ENCODE measurements at regions of chr20 and their contacts with region 1.

Region 1: GRCh38 chr20:51595058-51595532 is 52.6 kb upstream of the NFATC2 start:
- DNase-seq: peak; percentile 38
- H3K4me3 ChIP-seq: no peak overlapping the region
- H3K27me3 ChIP-seq: no peaks in the 10 kb centered on the region
- CTCF ChIP-seq: peak; percentile 90

Region 2: DNA sequence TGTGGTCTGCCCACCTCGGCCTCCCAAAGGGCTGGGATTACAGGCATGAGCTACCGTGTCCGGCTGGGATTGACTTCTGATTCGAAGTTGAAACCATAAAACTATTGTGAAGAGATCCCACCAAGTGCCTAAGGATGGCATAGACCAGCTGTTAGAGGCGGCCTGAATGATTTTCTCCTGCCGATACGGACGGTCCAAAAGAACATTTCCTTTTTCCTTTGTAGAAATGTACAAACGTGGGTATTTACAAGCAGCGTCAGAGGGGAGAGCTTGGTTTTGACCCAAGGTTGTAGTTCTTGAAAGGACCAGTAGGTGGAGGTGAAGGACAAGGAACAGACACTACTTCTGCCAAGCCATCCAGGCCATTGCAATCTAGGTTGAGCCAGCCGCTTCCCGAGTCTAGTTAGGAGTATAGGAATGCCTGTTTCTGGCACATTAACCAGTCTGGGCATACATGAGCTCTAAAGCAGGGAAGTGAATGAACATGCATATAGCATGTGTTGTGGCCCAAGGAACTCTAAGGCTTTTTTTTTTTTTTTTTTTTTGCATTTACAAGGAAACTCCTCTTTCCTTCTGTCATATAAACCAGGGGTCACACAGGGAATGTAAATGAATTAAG is 607.4 kb before region 1 on chr20:
- CTCF ChIA-PET with region 1: interaction called, 18 read pairs
- POLR2A ChIA-PET with region 1: no interaction called
- DNase-seq: peak; percentile 44
- H3K4me3 ChIP-seq: no peak overlapping the region
- H3K27me3 ChIP-seq: no peaks in the 10 kb centered on the region
- CTCF ChIP-seq: peak; percentile 80

Region 3: GRCh38 chr20:51372176-51372803 is 222.8 kb before region 1 on chr20:
- CTCF ChIA-PET with region 1: interaction called, 66 read pairs
- POLR2A ChIA-PET with region 1: no interaction called
- DNase-seq: no peak
- H3K4me3 ChIP-seq: no peak overlapping the region
- H3K27me3 ChIP-seq: no peaks in the 10 kb centered on the region
- CTCF ChIP-seq: peak; percentile 94

Region 4: DNA sequence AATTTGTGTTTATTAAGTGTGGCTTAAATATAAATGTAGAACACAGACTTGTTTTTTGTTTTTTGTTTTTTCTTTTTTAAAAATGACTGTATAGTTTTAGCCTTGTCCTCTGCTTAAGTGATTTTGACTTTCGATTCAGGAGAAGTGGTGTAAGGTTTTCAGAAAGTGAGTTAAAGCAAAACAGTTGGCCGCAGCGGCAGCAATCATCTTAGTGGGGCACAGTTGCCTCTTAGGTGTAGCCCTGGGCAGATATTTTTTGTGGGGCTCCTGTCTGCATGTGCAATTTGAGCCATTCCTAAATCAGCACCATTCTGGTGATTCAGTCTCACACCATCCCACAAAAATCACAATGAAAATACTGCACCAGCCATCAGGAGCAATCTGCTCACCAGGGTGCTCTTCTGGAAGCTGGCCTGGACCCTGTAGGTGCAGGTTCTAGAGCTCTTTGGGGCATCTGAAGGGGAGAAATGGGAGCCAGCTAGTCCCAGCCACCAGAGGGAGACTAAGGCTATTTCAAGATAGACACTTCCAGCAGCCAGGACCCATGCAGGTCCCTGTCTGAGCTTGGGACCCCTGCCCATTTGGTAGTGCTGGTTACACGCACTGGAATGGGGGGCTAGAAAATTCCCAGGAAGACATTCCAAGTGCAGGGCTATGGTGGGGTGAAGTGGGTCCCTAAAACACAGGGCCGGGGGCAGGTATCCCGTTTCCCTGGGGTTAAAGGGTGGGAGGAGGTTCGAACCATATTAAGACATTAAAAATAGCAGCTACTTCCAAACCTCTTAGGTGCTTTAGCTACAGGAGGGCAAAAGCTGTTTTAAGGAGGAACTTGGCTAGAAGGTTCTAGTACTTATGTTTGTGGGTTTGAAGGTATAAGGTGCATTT is 209.2 kb before region 1 on chr20:
- CTCF ChIA-PET with region 1: interaction called, 84 read pairs
- POLR2A ChIA-PET with region 1: no interaction called
- DNase-seq: no peak
- H3K4me3 ChIP-seq: no peak overlapping the region
- H3K27me3 ChIP-seq: no peaks in the 10 kb centered on the region
- CTCF ChIP-seq: peak; percentile 75

Region 5: DNA sequence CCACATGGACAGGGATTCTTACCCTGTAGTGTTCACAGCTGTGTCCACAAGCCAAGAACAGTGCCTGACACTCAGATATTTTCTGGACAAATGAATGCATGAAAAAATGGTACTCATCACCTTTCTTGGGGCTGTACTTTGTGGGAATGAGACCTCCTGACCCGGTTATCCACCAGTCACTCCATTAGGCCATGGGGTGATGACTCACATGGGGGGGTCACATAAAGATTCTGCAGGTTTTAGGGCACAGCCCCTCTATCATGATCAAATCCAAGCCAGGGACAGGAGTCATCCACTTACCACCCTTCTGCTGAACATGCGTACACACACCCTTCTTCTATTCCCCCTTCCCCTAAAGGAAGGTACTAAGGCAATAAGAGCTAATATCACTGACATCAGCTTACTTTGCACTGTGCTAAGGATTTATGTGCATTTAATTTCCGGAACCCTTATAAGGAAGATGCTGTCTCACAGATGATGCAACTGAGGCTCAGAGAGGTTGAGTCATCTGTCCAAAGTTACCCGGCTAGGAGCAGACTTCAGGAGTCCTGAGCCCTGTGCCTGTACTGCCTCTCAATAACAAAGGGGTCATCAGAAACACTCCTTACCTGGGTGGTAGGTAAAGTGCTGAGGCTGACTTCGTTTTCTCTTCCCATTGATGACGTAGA is 160.4 kb before region 1 on chr20:
- CTCF ChIA-PET with region 1: no interaction called
- POLR2A ChIA-PET with region 1: no interaction called
- DNase-seq: peak; percentile 37
- H3K4me3 ChIP-seq: no peak overlapping the region
- H3K27me3 ChIP-seq: no peaks in the 10 kb centered on the region
- CTCF ChIP-seq: no peak

Region 6: DNA sequence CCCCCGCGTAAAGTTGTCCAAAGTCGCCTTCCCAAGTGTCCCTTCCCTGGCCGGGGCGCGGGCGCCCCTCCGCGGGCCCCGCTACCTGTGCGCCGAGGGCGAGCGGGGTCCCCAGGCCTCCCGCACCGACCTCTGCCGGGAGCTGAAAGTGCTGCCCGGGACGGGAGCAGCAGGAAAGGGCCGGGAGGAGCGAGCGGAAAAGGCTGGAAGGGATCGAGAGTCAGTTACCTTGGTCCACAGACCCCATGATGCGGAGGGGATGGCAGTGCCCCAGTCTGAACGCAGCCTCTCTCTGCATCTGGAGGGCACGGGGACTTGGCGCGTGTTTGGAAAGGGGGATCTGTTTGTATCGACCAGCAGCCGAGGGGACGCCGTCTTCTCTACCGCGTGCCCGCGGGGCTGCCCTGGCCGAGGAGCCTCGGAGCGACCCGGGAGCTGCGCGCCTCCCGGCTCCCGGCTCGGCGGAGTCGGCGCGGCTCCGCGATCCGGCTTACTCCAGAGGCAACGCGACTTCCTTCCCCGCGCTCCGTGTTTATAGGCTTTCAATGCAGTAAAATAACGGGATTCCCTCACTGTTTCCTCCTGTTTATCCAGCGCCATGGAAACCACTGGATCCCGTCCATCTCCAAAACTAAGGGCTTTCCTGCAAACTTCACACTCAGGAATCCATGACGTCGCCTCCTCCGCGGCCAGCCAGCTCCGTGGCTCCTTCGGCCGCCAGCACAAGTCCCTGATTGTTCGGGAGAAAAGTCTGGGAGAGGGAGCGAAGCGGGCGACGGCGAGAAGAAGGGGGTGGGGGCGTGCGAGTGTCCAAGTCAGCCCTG is 32.6 kb before region 1 on chr20:
- CTCF ChIA-PET with region 1: interaction called, 13 read pairs
- POLR2A ChIA-PET with region 1: no interaction called
- DNase-seq: peak; percentile 89
- H3K4me3 ChIP-seq: peak overlapping the region; percentile 37
- H3K27me3 ChIP-seq: no peaks in the 10 kb centered on the region
- CTCF ChIP-seq: 0 out of 2 replicates have a peak, but pooled peaks have one; percentile 6

Region 7: GRCh38 chr20:51650685-51651134 is 55.6 kb after region 1 on chr20:
- CTCF ChIA-PET with region 1: no interaction called
- POLR2A ChIA-PET with region 1: no interaction called
- DNase-seq: no peak
- H3K4me3 ChIP-seq: no peak overlapping the region
- H3K27me3 ChIP-seq: no peaks in the 10 kb centered on the region
- CTCF ChIP-seq: no peak